ENCODE measurements at regions of chr2 and their contacts with region 1.

Region 1: DNA sequence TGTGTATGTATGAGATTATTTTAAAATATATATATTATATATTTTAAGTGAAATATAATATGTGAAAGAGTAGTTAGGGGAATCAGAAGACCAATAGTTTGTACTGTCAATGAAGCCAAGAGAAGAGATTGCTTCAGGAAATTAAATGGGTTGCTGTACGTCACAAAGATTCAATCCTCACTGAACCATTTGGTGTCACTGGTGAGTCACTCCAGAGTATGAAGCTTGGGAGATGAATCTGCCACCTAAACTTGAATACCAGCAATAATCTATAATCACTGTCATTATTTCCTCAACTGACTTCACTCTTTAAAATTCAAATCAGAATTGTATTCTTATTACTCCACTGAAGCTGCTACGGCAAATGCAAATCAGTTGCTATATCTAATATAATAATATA is 41.9 kb upstream of the SCN9A start:
- DNase-seq: peak; percentile 37
- H3K4me3 ChIP-seq: no peak overlapping the region
- H3K27ac ChIP-seq: no peak overlapping the region
- H3K4me1 ChIP-seq: peaks cover 2% of the 10 kb centered on the region
- H3K27me3 ChIP-seq: no peaks in the 10 kb centered on the region
- CTCF ChIP-seq: peak in 1 of 2 donors; percentile 23

Region 2: DNA sequence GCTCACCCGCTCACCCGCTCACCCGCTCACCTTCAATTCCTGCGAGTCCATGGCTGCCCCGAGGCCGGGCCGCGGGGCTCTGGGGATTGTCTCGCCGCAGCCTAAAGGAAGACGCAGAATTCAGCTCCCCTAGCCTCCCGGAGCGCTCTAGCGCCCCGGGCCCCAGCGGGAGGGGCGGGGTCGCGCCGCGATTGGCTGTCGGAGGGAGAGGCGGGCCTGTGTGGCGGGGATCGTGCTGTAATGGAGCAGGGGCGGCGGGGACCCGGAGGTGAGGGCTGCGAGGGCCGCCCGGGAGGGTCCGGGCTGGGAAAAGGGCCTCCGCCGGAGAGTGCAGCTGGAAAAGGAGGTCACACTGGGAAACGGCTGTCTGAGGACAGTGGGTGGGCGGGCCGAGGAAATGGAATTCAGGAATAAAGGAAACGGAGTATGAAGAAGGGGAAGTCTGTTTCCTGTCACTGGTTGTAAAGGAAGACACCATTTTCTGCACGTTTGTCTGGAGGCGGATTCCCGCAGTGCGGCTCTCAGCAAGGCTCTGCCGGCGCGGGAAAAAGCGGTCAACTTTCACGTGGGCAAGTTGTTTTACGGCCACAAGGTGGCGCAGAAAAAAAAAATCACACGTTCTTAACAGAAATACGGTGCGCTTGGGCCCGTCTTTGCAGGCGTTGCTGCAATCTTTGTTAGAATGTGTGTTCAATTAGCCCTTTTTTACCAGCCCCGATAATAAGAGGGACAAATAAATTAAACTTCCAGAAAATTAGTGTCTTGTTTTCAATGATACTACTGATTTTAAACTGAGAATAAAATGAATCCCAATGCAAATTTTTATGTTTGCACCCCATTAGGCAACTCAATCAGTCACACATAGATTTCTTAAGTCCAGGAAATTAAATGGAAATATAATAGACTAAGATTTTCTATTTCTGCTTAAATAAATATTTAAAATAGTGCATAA is 463.7 kb before region 1 on chr2 and contains the start of gene TTC21B:
- CTCF ChIA-PET with region 1: no interaction called
- dilution Hi-C with region 1: no loop called
- in situ Hi-C with region 1: no loop called
- intact Hi-C with region 1: loop called (anchors 2 kb)
- DNase-seq: peak; percentile 94
- H3K4me3 ChIP-seq: peak within 1 kb of the TSS; percentile 79 to 95 (median 84)
- H3K27ac ChIP-seq: peak within 1 kb of the TSS; percentile 85
- H3K4me1 ChIP-seq: peaks cover 5% of the 10 kb centered on the region
- H3K27me3 ChIP-seq: no peaks in the 10 kb centered on the region
- CTCF ChIP-seq: peak; percentile 68 to 71
- total RNA-seq, gene TTC21B: 9.3 to 20.7 TPM

Region 3: GRCh38 chr2:166057370-166058164 is 360.1 kb before region 1 on chr2:
- CTCF ChIA-PET with region 1: no interaction called
- dilution Hi-C with region 1: no loop called
- in situ Hi-C with region 1: no loop called
- intact Hi-C with region 1: loop called (anchors 5 kb)
- DNase-seq: no peak
- H3K4me3 ChIP-seq: no peak overlapping the region
- H3K27ac ChIP-seq: no peak overlapping the region
- H3K4me1 ChIP-seq: no peaks in the 10 kb centered on the region
- H3K27me3 ChIP-seq: peaks cover 2% of the 10 kb centered on the region
- CTCF ChIP-seq: peak; percentile 45 to 55

Region 4: DNA sequence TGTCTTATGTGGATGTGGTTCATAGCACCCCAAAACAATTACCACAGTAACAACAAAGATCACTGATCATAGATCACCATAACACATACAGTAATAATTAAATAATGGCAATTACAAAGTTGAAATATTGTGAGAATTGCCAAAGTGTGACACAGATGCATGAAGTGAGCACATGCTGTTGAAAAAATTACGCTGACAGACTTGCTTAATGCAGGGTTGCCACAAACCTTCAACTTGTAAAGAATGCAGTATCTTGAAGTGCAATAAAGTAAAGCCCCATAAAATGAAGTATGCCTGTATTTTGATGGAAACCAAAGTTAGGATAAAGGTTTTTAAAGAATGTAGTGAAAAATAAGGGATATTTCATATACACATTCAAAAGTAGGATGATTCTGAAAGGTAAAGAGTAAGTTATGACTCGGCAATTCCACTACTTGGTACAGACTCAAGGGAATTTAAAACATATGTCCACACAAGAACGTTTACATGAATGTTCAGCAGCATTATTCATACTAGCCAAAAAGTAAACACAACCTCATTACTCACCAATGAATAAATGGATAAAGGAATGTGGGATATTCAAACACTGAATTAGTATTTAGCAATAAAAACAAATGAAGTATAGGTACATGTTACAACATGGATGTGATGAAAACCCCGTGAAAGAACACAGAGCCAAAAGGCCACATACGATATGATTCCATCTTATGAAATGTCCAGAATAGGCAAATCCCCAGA is 103.5 kb before region 1 on chr2:
- CTCF ChIA-PET with region 1: no interaction called
- dilution Hi-C with region 1: no loop called
- in situ Hi-C with region 1: no loop called
- intact Hi-C with region 1: loop called (anchors 10 kb)
- DNase-seq: peak; percentile 79
- H3K4me3 ChIP-seq: no peak overlapping the region
- H3K27ac ChIP-seq: peak overlapping the region; percentile 68
- H3K4me1 ChIP-seq: peaks cover 7% of the 10 kb centered on the region
- H3K27me3 ChIP-seq: no peaks in the 10 kb centered on the region
- CTCF ChIP-seq: no peak

Region 5: GRCh38 chr2:166361351-166362153 is 56.1 kb before region 1 on chr2:
- CTCF ChIA-PET with region 1: interaction called, 6 read pairs
- dilution Hi-C with region 1: no loop called
- in situ Hi-C with region 1: no loop called
- intact Hi-C with region 1: loop called (anchors 1 kb)
- DNase-seq: no peak
- H3K4me3 ChIP-seq: no peak overlapping the region
- H3K27ac ChIP-seq: no peak overlapping the region
- H3K4me1 ChIP-seq: no peaks in the 10 kb centered on the region
- H3K27me3 ChIP-seq: no peaks in the 10 kb centered on the region
- CTCF ChIP-seq: peak; percentile 67 to 71

Region 6: GRCh38 chr2:166375736-166376487 is 41.8 kb before region 1 on chr2 and contains the start of gene SCN9A:
- CTCF ChIA-PET with region 1: no interaction called
- dilution Hi-C with region 1: no loop called
- in situ Hi-C with region 1: no loop called
- intact Hi-C with region 1: loop called (anchors 5 kb)
- DNase-seq: peak; percentile 56
- H3K4me3 ChIP-seq: peak within 1 kb of the TSS; percentile 58 to 66 (median 62)
- H3K27ac ChIP-seq: no peak within 1 kb of the TSS
- H3K4me1 ChIP-seq: peaks cover 6% of the 10 kb centered on the region
- H3K27me3 ChIP-seq: no peaks in the 10 kb centered on the region
- CTCF ChIP-seq: no peak
- total RNA-seq, gene SCN9A: 1.2 to 1.3 TPM

Region 7: DNA sequence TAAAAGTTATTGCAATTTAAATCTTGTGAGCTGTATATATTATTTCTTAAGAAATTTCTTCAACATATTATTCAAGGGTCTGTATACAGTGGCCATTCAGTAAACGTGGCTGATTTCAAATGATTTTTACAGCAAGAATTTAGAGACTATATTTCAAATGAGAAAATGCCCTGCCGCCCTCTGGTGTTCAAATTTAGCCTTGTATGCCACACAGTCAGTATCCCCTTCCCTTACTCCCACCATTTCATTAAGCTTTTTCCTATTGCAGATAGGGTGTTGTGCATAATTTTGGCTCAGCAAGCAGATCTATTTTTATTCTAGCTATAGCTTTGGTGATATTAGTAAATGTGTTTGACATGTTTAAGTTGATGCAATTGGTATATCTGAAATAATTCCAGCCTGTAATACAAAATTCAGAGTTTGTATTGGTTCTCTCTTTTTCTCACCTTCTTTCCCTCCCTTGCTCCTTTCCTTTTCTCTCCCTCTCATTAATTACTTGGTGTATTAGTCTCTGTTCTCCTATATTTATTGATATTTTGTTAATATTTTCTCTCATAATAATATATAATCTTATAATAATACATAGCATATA is 99.1 kb after region 1 on chr2:
- CTCF ChIA-PET with region 1: no interaction called
- dilution Hi-C with region 1: no loop called
- in situ Hi-C with region 1: no loop called
- intact Hi-C with region 1: loop called (anchors 2 kb)
- DNase-seq: peak; percentile 11
- H3K4me3 ChIP-seq: no peak overlapping the region
- H3K27ac ChIP-seq: no peak overlapping the region
- H3K4me1 ChIP-seq: peaks cover 13% of the 10 kb centered on the region
- H3K27me3 ChIP-seq: no peaks in the 10 kb centered on the region
- CTCF ChIP-seq: peak; percentile 51 to 67

Measured in mammary epithelial cell (primary cell).